Activated T-helper 1 cell treated with anti-CD3 and anti-CD28 coated beads, Interleukin-12 subunit alpha, Interleukin-12 subunit beta, Interleukin-2, Interleukin-4 antibody, amounts not matched to agents 30 ng/mL and 10 ng/mL and 1 ng/mL, durations not matched to agents 14 hours and 24 hours and 36 hours (primary cell): ENCODE measurements at regions of chr15 and their contacts with region 1.

Region 1: DNA sequence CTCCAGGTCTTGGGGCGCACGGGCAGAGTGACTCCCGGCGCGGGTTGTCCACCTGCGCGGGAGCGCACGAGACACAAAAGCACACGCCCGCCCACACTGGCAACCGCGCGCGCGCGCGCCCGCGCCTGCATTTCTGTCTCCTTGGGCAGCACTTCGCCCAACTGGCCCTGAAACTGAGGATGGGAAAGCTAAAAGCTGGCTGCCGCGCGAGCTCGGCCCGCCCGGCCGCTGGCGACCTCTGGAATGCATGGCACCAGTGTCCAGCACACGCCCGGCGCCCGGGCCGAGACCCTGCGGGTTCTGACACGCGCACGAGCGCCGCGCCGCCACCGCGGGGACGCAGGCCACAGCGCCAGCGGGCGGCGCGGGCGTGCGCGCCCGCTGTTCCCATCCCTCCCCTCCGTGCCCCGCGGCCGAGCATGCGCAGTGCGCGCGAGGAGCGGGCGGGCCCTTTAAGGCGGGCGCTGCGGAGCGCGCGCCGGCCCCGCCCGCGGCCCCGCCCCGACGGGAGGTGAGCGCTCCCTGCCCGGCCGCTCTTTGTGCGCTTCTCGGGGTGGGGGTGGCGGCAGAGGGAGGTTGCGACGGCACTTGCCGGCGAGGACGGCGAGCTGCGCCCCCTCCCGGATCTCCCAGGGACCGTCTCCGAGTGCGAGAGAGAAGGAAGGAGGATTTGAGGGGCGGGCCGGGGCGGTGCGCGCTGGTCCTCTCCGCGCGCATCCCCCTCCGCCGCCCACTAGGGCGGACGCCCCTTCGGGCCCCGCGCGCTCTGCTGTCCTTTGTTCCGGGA is 1.0 kb upstream of the MEX3B start:
- DNase-seq: peak; percentile 85
- H3K4me3 Mint-ChIP-seq: peak overlapping the region; percentile 89
- H3K27ac Mint-ChIP-seq: peak overlapping the region; percentile 79
- H3K4me1 Mint-ChIP-seq: peaks cover 12% of the 10 kb centered on the region
- H3K27me3 Mint-ChIP-seq: peaks cover 45% of the 10 kb centered on the region

Region 2: GRCh38 chr15:81000624-81001151 is 1046.2 kb before region 1 on chr15 and contains the start of gene TLNRD1:
- intact Hi-C with region 1: loop called (anchors 1 kb)
- DNase-seq: peak; percentile 89
- H3K4me3 Mint-ChIP-seq: peak within 1 kb of the TSS; percentile 97
- H3K27ac Mint-ChIP-seq: peak within 1 kb of the TSS; percentile 98
- H3K4me1 Mint-ChIP-seq: peaks cover 62% of the 10 kb centered on the region
- H3K27me3 Mint-ChIP-seq: peaks cover 2% of the 10 kb centered on the region
- total RNA-seq, gene TLNRD1: 30.2 and 30.8 TPM in 2 replicates

Region 3: GRCh38 chr15:81296673-81297072 is 750.2 kb before region 1 on chr15:
- intact Hi-C with region 1: loop called (anchors 5 kb)
- DNase-seq: peak; percentile 77
- H3K4me3 Mint-ChIP-seq: peak overlapping the region; percentile 97
- H3K27ac Mint-ChIP-seq: peak overlapping the region; percentile 94
- H3K4me1 Mint-ChIP-seq: peaks cover 95% of the 10 kb centered on the region
- H3K27me3 Mint-ChIP-seq: no peaks in the 10 kb centered on the region

Region 4: DNA sequence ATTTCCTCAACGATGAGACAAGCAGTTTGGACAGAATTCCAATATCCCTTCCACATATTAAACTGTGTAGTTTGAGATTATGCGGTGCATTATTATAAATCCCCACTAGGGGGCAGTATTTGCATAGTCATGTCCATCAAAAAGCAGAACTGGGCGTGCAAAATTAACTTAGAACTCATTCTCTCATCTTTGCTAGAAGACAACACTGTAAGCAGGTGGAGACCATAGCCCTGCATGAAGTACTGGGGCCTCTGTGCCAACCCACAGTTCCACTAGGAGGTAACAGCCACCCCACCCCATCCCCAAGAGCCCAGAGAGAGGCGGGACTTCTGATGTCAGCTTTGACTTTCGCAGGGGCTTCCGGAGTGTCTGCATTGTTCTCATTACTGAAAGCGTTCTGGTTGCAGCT is 566.2 kb before region 1 on chr15:
- intact Hi-C with region 1: loop called (anchors 1 kb)
- DNase-seq: no peak
- H3K4me3 Mint-ChIP-seq: no peak overlapping the region
- H3K27ac Mint-ChIP-seq: no peak overlapping the region
- H3K4me1 Mint-ChIP-seq: no peaks in the 10 kb centered on the region
- H3K27me3 Mint-ChIP-seq: peaks cover 2% of the 10 kb centered on the region

Region 5: GRCh38 chr15:81966631-81967030 is 80.2 kb before region 1 on chr15:
- intact Hi-C with region 1: no loop called
- DNase-seq: no peak
- H3K4me3 Mint-ChIP-seq: no peak overlapping the region
- H3K27ac Mint-ChIP-seq: no peak overlapping the region
- H3K4me1 Mint-ChIP-seq: no peaks in the 10 kb centered on the region
- H3K27me3 Mint-ChIP-seq: no peaks in the 10 kb centered on the region

Region 6: GRCh38 chr15:82262422-82263026 is 215.7 kb after region 1 on chr15 and contains the starts of genes EFL1 and SAXO2:
- intact Hi-C with region 1: loop called (anchors 2 kb)
- DNase-seq: peak; percentile 91
- H3K4me3 Mint-ChIP-seq: peak within 1 kb of the TSS; percentile 96
- H3K27ac Mint-ChIP-seq: peak within 1 kb of the TSS; percentile 95
- H3K4me1 Mint-ChIP-seq: peaks cover 27% of the 10 kb centered on the region
- H3K27me3 Mint-ChIP-seq: no peaks in the 10 kb centered on the region
- total RNA-seq, gene EFL1: 25.2 and 25.6 TPM in 2 replicates
- total RNA-seq, gene SAXO2: 0.54 and 0.57 TPM in 2 replicates